ENCODE measurements at regions of chr9 and their contacts with region 1.

Region 1: DNA sequence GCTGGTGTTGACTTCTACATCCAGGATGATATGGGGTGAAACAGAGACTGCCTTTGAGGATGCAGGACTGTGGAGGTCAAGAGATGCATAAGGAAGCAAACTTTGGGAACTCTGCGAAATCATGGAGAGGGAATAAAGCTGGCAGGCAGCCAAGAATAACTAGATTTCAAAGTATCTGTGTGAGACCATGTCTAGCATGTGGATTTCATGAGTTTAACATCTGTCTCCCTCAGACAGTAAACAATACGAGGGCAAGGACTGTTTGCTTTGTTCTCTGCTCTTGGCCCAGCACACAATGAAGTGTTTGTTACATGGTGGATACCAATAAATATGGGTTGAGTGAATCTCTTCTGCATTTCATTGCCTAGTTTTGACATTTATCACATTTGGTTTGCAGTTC is 71.3 kb downstream of the RASEF start:
- DNase-seq: no peak
- ATAC-seq: no peak
- H3K4me3 ChIP-seq: no peak overlapping the region
- H3K27ac ChIP-seq: no peak overlapping the region
- H3K4me1 ChIP-seq: peaks cover 10% of the 10 kb centered on the region
- H3K27me3 ChIP-seq: no peaks in the 10 kb centered on the region
- CTCF ChIP-seq: no peak

Region 2: DNA sequence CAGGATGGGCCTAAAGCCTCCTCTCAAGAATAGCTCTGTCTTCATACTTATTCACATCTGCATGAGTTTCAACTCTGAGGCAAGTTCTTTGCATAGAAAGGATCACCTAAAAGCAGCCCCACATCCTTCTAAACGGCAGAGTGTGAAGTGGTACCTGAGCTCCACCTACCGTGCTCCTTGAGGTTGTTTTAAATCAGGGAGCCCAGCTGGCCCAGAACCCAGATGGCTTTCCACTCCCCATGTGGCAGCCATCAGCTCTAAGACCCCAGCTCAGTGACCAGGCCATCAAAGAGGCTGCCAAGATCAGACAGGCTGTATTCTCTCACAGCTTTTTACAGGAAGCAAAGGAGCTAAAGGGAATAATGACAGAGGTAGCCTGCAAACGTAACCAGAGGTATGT is 228.0 kb before region 1 on chr9:
- CTCF ChIA-PET with region 1: no interaction called
- POLR2A ChIA-PET with region 1: no interaction called
- intact Hi-C with region 1: no loop called
- DNase-seq: peak; percentile 34
- ATAC-seq: no peak
- H3K4me3 ChIP-seq: no peak overlapping the region
- H3K27ac ChIP-seq: no peak overlapping the region
- H3K4me1 ChIP-seq: no peaks in the 10 kb centered on the region
- H3K27me3 ChIP-seq: peaks cover 9% of the 10 kb centered on the region; the same call in 1 of the 2 replicates
- CTCF ChIP-seq: peak; percentile 47; the same call in 1 of the 2 replicates

Region 3: DNA sequence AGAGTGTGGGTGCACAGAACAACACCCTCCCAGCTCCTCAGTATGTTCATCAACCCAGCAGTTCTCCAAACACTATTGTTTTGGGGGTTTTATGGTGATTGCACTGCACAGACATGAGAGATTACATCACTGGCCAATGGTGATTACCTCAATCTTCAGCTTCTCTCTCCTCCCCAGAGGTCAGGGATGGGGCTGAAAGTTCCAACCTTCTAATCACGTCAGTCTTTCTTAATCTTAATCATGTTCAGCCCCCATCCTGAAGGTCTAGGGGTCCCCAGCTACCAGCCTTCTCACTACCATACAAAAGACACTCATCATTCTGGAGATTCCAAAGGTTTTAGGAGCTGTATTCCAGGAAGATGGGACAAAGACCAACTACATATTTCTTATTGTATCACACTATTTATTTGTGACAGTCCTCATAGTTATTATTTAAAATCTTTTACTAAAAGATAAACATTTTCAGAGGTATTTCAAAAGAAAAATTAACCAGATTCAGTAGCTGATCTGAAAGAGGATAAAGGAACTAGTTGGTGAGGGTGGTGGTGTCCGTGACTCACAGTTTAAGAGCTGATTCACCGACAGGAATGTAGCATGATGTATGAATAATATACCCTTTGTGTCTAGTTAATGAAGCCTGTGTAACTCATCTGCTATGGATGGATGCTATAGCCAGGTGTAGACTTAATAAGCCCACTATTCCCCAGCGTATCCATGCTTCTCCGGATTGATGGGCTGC is 35.7 kb after region 1 on chr9:
- CTCF ChIA-PET with region 1: no interaction called
- POLR2A ChIA-PET with region 1: no interaction called
- intact Hi-C with region 1: loop called (anchors 2 kb)
- DNase-seq: peak; percentile 85
- ATAC-seq: peak; percentile 96
- H3K4me3 ChIP-seq: peak overlapping the region; percentile 33; the same call in 1 of the 2 replicates
- H3K27ac ChIP-seq: peak overlapping the region; percentile 94
- H3K4me1 ChIP-seq: peaks cover 36% of the 10 kb centered on the region
- H3K27me3 ChIP-seq: no peaks in the 10 kb centered on the region
- CTCF ChIP-seq: no peak

Measured in PC-3 (cell line).